A673 (cell line): ENCODE measurements at regions of chrX and their contacts with region 1.

Region 1: DNA sequence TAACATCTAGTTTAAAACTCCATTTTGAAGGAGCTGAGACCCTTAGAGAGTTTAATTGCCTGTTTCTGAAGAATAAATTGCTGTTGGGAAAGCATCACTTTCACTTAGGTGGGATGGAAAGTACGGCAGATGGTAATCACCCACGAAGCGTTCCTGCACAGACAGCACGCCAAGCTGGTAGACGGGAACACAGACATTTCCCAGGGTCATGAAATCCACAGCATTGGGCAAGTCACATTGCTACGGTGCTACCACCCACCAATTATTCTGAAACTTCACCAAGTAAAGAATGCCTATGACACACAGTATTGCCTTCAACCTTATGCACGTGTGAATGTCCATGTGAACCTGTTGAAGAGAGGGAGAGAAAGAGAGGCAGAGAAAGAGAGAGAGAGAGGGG is 1004.8 kb upstream of the PRKX start:
- DNase-seq: no peak
- H3K4me3 ChIP-seq: no peak overlapping the region
- H3K27ac ChIP-seq: no peak overlapping the region
- H3K4me1 ChIP-seq: no peaks in the 10 kb centered on the region
- H3K27me3 ChIP-seq: no peaks in the 10 kb centered on the region
- CTCF ChIP-seq: no peak

Region 2: DNA sequence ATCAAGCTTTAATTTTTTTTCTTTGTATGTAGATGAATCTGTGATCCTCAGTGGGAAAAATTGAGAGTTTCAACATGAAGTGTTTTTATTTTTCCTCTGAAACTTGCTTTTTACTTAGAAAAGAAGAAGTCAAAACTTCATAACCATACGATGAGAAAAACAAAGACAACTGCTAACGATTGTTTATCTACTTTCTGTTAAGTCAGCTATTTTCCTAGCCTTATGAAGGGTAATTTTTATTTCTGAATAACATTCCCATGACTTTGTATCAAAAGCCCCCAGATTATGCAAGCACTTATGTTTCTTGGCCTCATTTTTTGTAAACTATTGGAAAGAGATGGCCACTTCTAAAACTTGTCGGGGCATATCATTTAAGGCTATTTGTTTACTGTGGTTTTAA is 359.7 kb before region 1 on chrX:
- CTCF ChIA-PET with region 1: no interaction called
- POLR2A ChIA-PET with region 1: no interaction called
- intact Hi-C with region 1: no loop called
- DNase-seq: no peak
- H3K4me3 ChIP-seq: no peak overlapping the region
- H3K27ac ChIP-seq: no peak overlapping the region
- H3K4me1 ChIP-seq: no peaks in the 10 kb centered on the region
- H3K27me3 ChIP-seq: no peaks in the 10 kb centered on the region
- CTCF ChIP-seq: no peak

Region 3: GRCh38 chrX:4588056-4588455 is 130.2 kb before region 1 on chrX:
- CTCF ChIA-PET with region 1: no interaction called
- POLR2A ChIA-PET with region 1: no interaction called
- intact Hi-C with region 1: no loop called
- DNase-seq: peak; percentile 72
- H3K4me3 ChIP-seq: no peak overlapping the region
- H3K27ac ChIP-seq: no peak overlapping the region
- H3K4me1 ChIP-seq: peaks cover 20% of the 10 kb centered on the region
- H3K27me3 ChIP-seq: no peaks in the 10 kb centered on the region
- CTCF ChIP-seq: no peak

Region 4: GRCh38 chrX:5265324-5265850 is 547.1 kb after region 1 on chrX:
- CTCF ChIA-PET with region 1: no interaction called
- POLR2A ChIA-PET with region 1: interaction called, 12 read pairs
- intact Hi-C with region 1: no loop called
- DNase-seq: no peak
- H3K4me3 ChIP-seq: no peak overlapping the region
- H3K27ac ChIP-seq: no peak overlapping the region
- H3K4me1 ChIP-seq: no peaks in the 10 kb centered on the region
- H3K27me3 ChIP-seq: no peaks in the 10 kb centered on the region
- CTCF ChIP-seq: no peak